IMR-90 (cell line): ENCODE measurements at regions of chr6 and their contacts with region 1.

Region 1: DNA sequence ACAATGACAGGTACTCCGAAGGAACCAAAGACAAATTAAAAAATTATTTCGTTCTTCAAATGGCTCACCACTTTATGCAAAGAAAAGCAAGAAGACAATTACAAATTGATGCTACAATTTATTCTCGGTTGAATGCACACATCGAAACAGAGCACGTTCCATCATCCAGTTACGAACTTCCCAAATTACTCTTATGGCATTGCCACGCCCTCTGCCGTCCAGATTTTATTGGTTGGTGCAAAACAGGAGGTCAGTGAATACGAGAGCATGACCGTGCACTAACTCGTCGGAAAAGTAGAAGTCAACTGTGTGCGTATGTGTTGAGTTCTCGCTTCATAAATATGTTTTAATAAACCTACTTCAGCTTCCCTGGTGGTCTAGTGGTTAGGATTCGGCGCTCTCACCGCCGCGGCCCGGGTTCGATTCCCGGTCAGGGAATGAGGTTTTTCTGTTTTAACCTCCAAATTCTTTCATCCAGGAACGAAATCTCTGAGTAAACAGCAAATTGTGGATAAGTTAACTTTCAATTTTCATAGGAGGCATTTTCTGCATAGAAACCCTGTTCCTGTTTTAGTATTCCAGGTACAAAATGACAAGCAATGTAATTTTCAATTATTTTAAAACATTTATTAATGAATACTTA is 23.2 kb downstream of the ZNF311 start:
- DNase-seq: peak; percentile 87
- ATAC-seq: peak; percentile 65
- H3K4me3 ChIP-seq: peak overlapping the region; percentile 58
- H3K27ac ChIP-seq: no peak overlapping the region
- H3K4me1 ChIP-seq: peaks cover 2% of the 10 kb centered on the region; the same call in 1 of the 2 replicates
- H3K27me3 ChIP-seq: no peaks in the 10 kb centered on the region; the same call in 1 of the 2 replicates
- CTCF ChIP-seq: no peak
- POLR2A ChIP-seq: no peak
- RAD21 ChIP-seq: no peak

Region 2: DNA sequence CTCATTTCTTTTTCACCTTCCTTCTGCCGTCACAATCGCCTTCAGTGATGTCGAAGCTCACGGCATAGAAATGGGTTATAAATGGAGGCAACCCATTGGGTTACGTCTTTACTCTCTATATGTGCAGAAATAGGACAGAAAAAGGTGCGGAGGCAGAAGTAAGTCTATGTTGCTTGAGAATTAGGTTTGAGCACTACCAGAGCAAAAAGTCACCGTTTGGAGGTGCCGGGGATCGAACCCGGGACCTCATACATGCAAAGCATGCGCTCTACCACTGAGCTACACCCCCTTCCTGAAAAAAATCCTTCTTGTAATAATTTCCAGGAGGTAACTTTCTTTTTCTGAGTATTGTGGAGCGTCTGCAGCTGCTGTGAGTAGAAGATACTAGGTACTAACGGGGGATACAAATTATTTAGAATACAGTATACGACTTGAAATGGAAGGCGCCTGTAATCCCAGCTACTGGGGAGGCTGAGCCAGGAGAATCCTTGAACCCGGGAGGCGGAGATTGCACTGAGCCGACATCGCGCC is 192.3 kb before region 1 on chr6:
- CTCF ChIA-PET with region 1: no interaction called
- POLR2A ChIA-PET with region 1: no interaction called
- dilution Hi-C with region 1: no loop called
- in situ Hi-C with region 1: no loop called
- intact Hi-C with region 1: loop called (anchors 1 kb)
- DNase-seq: peak; percentile 68
- ATAC-seq: peak; percentile 85
- H3K4me3 ChIP-seq: peak overlapping the region; percentile 77
- H3K27ac ChIP-seq: no peak overlapping the region
- H3K4me1 ChIP-seq: no peaks in the 10 kb centered on the region
- H3K27me3 ChIP-seq: peaks cover 29% of the 10 kb centered on the region
- CTCF ChIP-seq: no peak
- POLR2A ChIP-seq: no peak
- RAD21 ChIP-seq: no peak

Region 3: DNA sequence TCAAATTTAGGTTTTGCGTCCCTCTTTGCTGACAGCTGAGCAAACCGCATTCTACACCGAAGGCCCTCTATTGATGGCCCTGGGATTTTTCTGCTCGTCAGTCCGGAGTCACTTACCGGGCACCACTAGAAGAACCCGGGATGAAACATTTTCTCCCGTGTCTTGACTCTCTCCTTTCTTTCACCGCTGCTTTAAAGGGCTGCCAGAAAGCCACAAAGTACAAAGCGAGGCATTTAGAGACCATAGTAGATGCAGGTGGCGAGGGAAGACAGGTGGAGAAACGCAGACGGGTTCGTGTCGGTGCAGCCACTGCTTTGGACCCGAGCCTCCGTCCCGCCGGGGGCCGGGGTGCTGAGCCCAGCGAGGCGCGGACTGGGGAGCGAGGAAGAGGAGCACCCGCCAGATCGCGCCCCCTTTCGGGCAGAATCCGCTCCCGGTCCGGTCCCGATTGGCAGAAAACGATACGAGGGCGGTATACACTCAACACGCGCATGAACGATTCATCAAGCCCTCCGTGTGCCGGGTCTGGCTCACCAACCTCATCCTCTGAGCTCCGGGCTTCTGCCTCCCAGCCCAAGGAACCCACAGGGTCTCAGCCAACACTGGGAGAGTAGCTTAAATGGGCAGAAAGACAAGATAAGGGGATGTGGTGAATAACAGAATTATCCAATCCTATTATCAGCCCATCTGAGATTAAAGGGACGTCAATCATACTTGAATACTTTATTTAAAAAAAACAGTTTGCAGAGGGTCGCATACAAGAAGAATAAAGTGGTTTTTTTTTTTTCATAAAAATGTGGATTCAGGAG is 143.1 kb before region 1 on chr6:
- CTCF ChIA-PET with region 1: no interaction called
- POLR2A ChIA-PET with region 1: no interaction called
- dilution Hi-C with region 1: no loop called
- in situ Hi-C with region 1: no loop called
- intact Hi-C with region 1: loop called (anchors 1 kb)
- DNase-seq: peak; percentile 80
- ATAC-seq: peak; percentile 95
- H3K4me3 ChIP-seq: peak overlapping the region; percentile 65
- H3K27ac ChIP-seq: no peak overlapping the region
- H3K4me1 ChIP-seq: no peaks in the 10 kb centered on the region
- H3K27me3 ChIP-seq: no peaks in the 10 kb centered on the region
- CTCF ChIP-seq: peak; percentile 71
- POLR2A ChIP-seq: no peak
- RAD21 ChIP-seq: peak; percentile 38

Region 4: GRCh38 chr6:28896505-28897368 is 85.2 kb before region 1 on chr6:
- CTCF ChIA-PET with region 1: no interaction called
- POLR2A ChIA-PET with region 1: interaction called, 3 read pairs
- dilution Hi-C with region 1: no loop called
- in situ Hi-C with region 1: no loop called
- intact Hi-C with region 1: loop called (anchors 2 kb)
- DNase-seq: peak; percentile 55
- ATAC-seq: peak; percentile 18
- H3K4me3 ChIP-seq: peak overlapping the region; percentile 81
- H3K27ac ChIP-seq: peak overlapping the region; percentile 75
- H3K4me1 ChIP-seq: no peaks in the 10 kb centered on the region
- H3K27me3 ChIP-seq: no peaks in the 10 kb centered on the region
- CTCF ChIP-seq: no peak
- POLR2A ChIP-seq: peak; percentile 13
- RAD21 ChIP-seq: no peak

Region 5: GRCh38 chr6:28940858-28941680 is 40.9 kb before region 1 on chr6:
- CTCF ChIA-PET with region 1: no interaction called
- POLR2A ChIA-PET with region 1: no interaction called
- dilution Hi-C with region 1: no loop called
- in situ Hi-C with region 1: no loop called
- intact Hi-C with region 1: loop called (anchors 1 kb)
- DNase-seq: peak; percentile 88
- ATAC-seq: peak; percentile 73
- H3K4me3 ChIP-seq: peak overlapping the region; percentile 74
- H3K27ac ChIP-seq: peak overlapping the region; percentile 18
- H3K4me1 ChIP-seq: no peaks in the 10 kb centered on the region
- H3K27me3 ChIP-seq: no peaks in the 10 kb centered on the region
- CTCF ChIP-seq: no peak
- POLR2A ChIP-seq: no peak
- RAD21 ChIP-seq: no peak

Region 6: GRCh38 chr6:29016559-29017427 is 34.8 kb after region 1 on chr6:
- CTCF ChIA-PET with region 1: interaction called, 3 read pairs
- POLR2A ChIA-PET with region 1: no interaction called
- dilution Hi-C with region 1: no loop called
- in situ Hi-C with region 1: no loop called
- intact Hi-C with region 1: loop called (anchors 1 kb)
- DNase-seq: peak; percentile 76
- ATAC-seq: peak; percentile 97
- H3K4me3 ChIP-seq: peak overlapping the region; percentile 64
- H3K27ac ChIP-seq: no peak overlapping the region; the same call in 1 of the 2 replicates
- H3K4me1 ChIP-seq: no peaks in the 10 kb centered on the region
- H3K27me3 ChIP-seq: peaks cover 10% of the 10 kb centered on the region
- CTCF ChIP-seq: peak; percentile 78
- POLR2A ChIP-seq: no peak
- RAD21 ChIP-seq: peak; percentile 73

Region 7: GRCh38 chr6:29183594-29183993 is 201.6 kb after region 1 on chr6:
- CTCF ChIA-PET with region 1: no interaction called
- POLR2A ChIA-PET with region 1: no interaction called
- dilution Hi-C with region 1: no loop called
- in situ Hi-C with region 1: no loop called
- intact Hi-C with region 1: no loop called
- DNase-seq: no peak
- ATAC-seq: no peak
- H3K4me3 ChIP-seq: no peak overlapping the region
- H3K27ac ChIP-seq: no peak overlapping the region
- H3K4me1 ChIP-seq: no peaks in the 10 kb centered on the region
- H3K27me3 ChIP-seq: no peaks in the 10 kb centered on the region
- CTCF ChIP-seq: no peak
- POLR2A ChIP-seq: no peak
- RAD21 ChIP-seq: no peak